Left cardiac atrium (tissue), 4 donors: ENCODE measurements at regions of chr20 and their contacts with region 1.

Region 1: DNA sequence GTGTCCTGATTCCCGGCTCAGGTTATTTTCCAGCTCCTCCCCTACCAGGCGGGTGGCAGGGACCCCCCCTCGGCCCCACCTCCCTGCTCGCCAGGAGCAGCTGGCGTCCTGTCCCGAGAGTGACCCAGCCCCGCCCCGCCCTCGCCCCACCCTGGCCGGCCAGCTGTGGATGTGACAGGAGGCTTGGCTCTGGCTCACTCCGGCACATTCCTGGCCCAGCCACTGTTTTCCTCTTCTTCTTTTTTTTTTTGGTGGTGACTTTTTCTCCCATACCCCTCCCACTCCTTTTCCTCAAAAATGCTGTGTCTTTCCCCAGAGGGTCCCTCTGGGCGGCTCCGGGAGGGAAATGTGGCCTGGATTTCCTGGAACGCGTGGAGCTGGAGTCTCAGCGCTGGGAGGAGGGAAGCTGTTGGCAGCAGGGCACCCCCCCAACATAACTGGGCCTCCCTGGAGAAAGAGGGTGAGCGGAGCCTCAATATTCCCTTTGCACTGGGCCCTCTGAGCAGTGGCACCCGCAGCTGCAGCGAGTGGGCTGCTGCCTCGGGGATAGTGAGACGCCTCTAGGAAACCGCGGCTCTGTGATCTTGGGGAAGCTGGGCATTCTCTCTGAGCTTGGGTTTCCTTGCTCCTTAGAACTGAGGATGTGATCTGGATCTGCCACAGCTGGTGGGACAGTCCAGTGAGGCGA is 28.3 kb upstream of the CSNK2A1 start:
- DNase-seq: peak; percentile 75
- ATAC-seq: peak; percentile 75 to 83

Region 2: DNA sequence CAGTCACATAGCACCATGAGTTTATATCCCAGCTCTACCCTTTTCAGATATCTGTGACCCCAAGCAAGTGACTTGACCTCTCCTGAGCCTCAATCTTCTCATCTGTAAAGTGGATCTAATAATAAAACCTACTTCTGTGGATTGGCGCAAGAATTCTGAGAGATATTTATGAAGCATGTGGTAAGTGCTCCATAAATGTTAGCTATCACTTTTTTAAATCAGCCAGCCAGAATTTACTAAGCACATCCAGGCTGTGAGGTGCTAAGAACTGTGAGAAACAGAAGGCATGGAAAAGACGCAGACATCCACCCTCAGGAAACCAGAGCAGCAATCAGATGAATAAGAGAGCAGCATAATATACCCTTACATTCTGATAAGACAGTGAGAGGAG is 282.2 kb before region 1 on chr20:
- intact Hi-C with region 1: no loop called
- DNase-seq: no peak
- ATAC-seq: no peak

Region 3: GRCh38 chr20:609371-609964 is 37.6 kb after region 1 on chr20:
- intact Hi-C with region 1: loop called in 1 of 2 experiments (anchors 5 kb)
- DNase-seq: no peak
- ATAC-seq: no peak